Panc1 (cell line): ENCODE measurements at regions of chr3 and their contacts with region 1.

Region 1: DNA sequence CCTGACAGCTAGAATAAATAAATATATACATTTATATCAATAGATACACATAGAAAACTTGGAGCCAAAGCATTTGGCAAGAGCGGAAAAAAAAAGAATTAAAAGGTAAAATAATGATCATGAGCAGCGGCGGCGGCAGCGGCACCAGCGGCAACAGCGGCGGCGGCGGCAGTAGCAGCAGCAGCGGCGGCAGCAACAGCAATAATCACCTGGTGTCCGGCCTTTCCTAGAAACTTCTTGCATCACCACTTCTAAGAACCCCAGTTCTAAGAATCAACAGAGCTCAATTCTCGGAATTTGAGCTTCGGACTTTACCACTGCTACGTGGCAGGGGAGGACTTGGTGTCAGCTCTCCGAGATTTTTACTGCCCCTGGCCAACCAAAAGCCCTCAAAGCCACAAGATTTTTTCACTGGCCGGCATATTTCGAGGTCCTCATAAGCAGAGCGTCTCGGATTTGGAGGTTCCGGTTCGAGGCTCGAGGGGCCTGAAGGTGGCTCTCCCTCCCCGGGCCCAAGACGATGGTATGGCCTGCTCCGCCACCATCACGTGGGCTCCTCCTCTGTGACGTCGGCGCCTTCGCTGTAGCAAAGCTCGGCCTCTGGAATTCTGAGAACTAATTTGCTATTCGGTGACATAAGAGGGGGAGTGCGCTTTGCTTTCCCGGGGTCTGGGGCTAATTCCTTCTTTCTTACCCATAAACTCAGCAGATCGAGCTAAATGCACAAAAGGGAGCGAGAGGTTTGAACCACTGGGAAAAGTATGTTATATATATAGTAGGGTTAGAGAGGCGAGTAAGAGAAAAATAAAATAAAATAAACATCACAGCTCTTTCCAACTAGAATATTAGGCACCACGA is at the start of gene BCL6:
- DNase-seq: peak; percentile 91
- ATAC-seq: peak; percentile 75
- H3K4me3 ChIP-seq: peak within 1 kb of the TSS; percentile 60 to 94
- H3K27ac ChIP-seq: peak within 1 kb of the TSS; percentile 100
- H3K4me1 ChIP-seq: peaks cover 54% of the 10 kb centered on the region
- H3K27me3 ChIP-seq: no peaks in the 10 kb centered on the region
- CTCF ChIP-seq: no peak
- total RNA-seq, gene BCL6: 21.5 TPM

Region 2: GRCh38 chr3:187662848-187663409 is 82.5 kb before region 1 on chr3:
- CTCF ChIA-PET with region 1: no interaction called
- POLR2A ChIA-PET with region 1: no interaction called
- in situ Hi-C with region 1: no loop called
- intact Hi-C with region 1: no loop called
- DNase-seq: no peak
- ATAC-seq: no peak
- H3K4me3 ChIP-seq: no peak overlapping the region
- H3K27ac ChIP-seq: no peak overlapping the region
- H3K4me1 ChIP-seq: no peaks in the 10 kb centered on the region
- H3K27me3 ChIP-seq: peaks cover 12% of the 10 kb centered on the region; the same call in 1 of the 2 replicates
- CTCF ChIP-seq: no peak

Region 3: GRCh38 chr3:187807086-187807862 is 61.8 kb after region 1 on chr3:
- CTCF ChIA-PET with region 1: interaction called, 3 read pairs
- POLR2A ChIA-PET with region 1: interaction called, 4 read pairs
- in situ Hi-C with region 1: loop called (anchors 5 kb)
- intact Hi-C with region 1: no loop called
- DNase-seq: no peak
- ATAC-seq: no peak
- H3K4me3 ChIP-seq: no peak overlapping the region
- H3K27ac ChIP-seq: peak overlapping the region; percentile 60; the same call in 1 of the 2 replicates
- H3K4me1 ChIP-seq: peaks cover 25% of the 10 kb centered on the region
- H3K27me3 ChIP-seq: no peaks in the 10 kb centered on the region; the same call in 1 of the 2 replicates
- CTCF ChIP-seq: no peak

Region 4: DNA sequence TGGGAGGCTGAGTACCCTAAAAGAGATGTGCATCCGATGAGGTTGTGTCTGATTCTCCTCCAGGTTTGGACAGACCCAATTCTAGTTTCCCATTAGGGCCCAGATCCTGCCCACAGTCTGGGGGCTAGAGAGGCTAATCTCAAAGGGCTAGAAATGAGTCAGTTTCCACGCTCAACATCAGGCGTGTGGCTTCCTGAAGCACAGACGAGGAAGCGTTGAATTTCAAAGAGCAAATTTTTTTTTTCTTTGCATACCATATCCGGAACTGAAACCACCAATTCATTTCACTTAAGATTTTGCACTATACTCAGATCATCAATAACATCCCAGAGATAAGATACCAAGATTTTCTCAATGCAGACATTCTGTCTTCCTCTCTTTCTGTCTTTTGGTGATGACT is 173.6 kb after region 1 on chr3:
- CTCF ChIA-PET with region 1: no interaction called
- POLR2A ChIA-PET with region 1: no interaction called
- in situ Hi-C with region 1: loop called (anchors 10 kb)
- intact Hi-C with region 1: loop called (anchors 5 kb)
- DNase-seq: no peak
- ATAC-seq: no peak
- H3K4me3 ChIP-seq: no peak overlapping the region
- H3K27ac ChIP-seq: peak overlapping the region; percentile 40; the same call in 1 of the 2 replicates
- H3K4me1 ChIP-seq: peaks cover 17% of the 10 kb centered on the region
- H3K27me3 ChIP-seq: no peaks in the 10 kb centered on the region
- CTCF ChIP-seq: no peak

Region 5: DNA sequence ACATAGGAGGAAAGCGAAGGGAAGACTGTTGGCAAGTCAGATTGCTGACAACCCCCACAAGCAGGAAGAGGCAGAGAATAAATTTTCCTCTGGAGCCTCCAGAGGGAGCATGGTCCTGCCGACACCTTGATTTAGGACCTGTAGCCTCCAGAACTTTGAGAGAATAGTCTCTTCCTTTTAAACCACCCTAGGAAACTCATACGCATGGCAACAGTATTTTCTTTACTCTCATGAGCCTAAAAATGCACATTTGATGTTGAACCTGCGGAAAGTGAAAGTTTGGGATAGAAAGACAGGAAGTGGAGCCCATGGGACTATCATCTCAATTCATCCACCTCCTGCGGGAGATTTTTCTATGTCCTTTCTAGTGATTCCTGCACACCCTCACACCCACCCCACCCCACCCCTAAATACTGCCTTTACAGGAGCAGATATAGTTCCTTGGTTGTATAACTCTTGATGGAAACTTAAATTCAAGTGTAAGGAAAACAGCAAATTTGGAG is 291.8 kb after region 1 on chr3:
- CTCF ChIA-PET with region 1: interaction called, 3 read pairs
- POLR2A ChIA-PET with region 1: no interaction called
- in situ Hi-C with region 1: no loop called
- intact Hi-C with region 1: loop called (anchors 10 kb)
- DNase-seq: no peak
- ATAC-seq: peak; percentile 80
- H3K4me3 ChIP-seq: no peak overlapping the region
- H3K27ac ChIP-seq: no peak overlapping the region
- H3K4me1 ChIP-seq: peaks cover 9% of the 10 kb centered on the region
- H3K27me3 ChIP-seq: no peaks in the 10 kb centered on the region
- CTCF ChIP-seq: peak; percentile 78

Region 6: GRCh38 chr3:188270423-188270972 is 525.1 kb after region 1 on chr3:
- CTCF ChIA-PET with region 1: interaction called, 3 read pairs
- POLR2A ChIA-PET with region 1: no interaction called
- in situ Hi-C with region 1: loop called (anchors 25 kb)
- intact Hi-C with region 1: loop called (anchors 5 kb)
- DNase-seq: no peak
- ATAC-seq: peak; percentile 74
- H3K4me3 ChIP-seq: peak overlapping the region in 1 of 2 experiments; percentile 10; a peak in 1 of 4 replicates
- H3K27ac ChIP-seq: peak overlapping the region; percentile 88
- H3K4me1 ChIP-seq: peaks cover 85% of the 10 kb centered on the region
- H3K27me3 ChIP-seq: no peaks in the 10 kb centered on the region
- CTCF ChIP-seq: no peak

Region 7: GRCh38 chr3:188400494-188401243 is 655.2 kb after region 1 on chr3:
- CTCF ChIA-PET with region 1: no interaction called
- POLR2A ChIA-PET with region 1: no interaction called
- in situ Hi-C with region 1: no loop called
- intact Hi-C with region 1: loop called (anchors 10 kb)
- DNase-seq: no peak
- ATAC-seq: no peak
- H3K4me3 ChIP-seq: no peak overlapping the region
- H3K27ac ChIP-seq: no peak overlapping the region
- H3K4me1 ChIP-seq: no peaks in the 10 kb centered on the region; the same call in 1 of the 2 replicates
- H3K27me3 ChIP-seq: no peaks in the 10 kb centered on the region
- CTCF ChIP-seq: no peak

Region 8: DNA sequence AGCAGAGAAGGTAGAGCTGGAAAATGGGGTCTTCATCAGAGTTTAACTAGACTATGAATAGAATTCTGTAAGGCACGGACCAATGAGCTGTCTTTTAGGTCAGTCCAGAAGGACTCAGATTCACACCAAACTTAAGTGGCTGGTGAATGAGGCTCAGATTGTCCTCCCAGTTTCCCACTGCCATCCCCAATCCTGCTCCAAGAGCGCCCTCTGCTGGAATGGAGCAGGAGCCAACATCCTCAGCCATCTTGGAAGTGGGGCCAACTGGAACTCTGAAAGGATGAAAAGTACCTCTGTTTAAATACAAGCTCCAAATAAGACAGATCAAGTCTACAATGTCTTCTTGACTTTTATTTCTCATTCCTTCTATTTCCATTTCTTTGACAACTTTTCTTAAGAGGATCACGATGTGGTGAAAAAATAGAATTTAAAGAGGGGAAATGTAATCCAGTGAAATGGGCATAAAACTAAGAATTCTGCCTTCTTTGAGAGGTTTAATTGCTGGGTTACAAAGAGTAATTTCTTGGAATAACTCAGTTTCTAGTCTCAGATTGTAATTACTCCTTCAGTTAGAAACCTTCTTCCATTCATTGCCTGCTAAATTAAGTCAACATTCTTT is 1209.3 kb after region 1 on chr3:
- CTCF ChIA-PET with region 1: interaction called, 57 read pairs
- POLR2A ChIA-PET with region 1: no interaction called
- in situ Hi-C with region 1: loop called (anchors 10 kb)
- intact Hi-C with region 1: loop called (anchors 1 kb)
- DNase-seq: peak; percentile 78
- ATAC-seq: peak; percentile 89
- H3K4me3 ChIP-seq: no peak overlapping the region
- H3K27ac ChIP-seq: no peak overlapping the region
- H3K4me1 ChIP-seq: peaks cover 13% of the 10 kb centered on the region
- H3K27me3 ChIP-seq: no peaks in the 10 kb centered on the region
- CTCF ChIP-seq: peak; percentile 93